Aorta (tissue), 5 donors: ENCODE measurements at regions of chr6 and their contacts with region 1.

Region 1: DNA sequence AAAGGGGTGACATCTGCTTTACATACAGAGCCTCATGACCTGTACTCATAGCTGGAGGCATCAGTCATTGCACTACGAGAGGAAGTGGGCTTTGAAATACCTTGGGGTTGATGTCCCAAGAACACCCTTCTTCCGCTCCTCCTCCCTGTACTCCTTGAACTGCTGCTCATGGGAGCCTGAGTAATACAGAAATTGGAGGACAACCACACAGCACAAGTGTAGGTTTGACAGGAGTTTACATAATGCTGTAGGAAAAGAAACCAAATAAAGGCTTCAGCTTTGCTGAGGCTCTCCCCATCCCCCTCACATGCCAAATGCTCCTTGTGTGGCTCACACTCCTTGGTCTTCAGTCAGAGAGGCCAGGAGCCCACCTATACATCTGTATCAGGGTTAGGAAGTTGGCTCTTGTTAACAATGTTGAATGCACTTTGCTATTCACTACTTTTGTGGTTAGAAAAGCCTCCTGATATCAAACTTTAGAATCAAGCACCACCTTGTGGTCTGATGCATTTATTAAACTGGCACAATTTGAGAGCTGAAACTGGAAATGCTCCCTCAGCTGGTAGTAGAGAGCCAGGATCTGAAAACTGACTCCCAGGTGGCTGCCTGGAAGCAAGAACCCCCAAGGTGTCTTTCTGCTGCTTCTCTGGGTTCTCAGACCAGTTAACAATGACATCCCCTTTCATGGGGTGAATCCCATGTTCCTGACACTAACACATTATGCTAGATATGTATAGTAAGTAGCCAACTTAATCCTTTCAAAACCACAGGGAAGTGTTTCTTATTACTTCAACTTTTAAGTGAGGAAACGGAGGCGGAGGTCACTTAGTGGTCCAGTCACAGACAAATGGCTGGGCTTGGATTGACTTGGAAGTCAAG is 56.2 kb upstream of the EDN1 start:
- DNase-seq: no peak
- ATAC-seq: peak; percentile 80
- H3K4me3 ChIP-seq: no peak overlapping the region
- H3K27ac ChIP-seq: no peak overlapping the region
- H3K4me1 ChIP-seq: no peaks in the 10 kb centered on the region
- H3K27me3 ChIP-seq: no peaks in the 10 kb centered on the region

Region 2: DNA sequence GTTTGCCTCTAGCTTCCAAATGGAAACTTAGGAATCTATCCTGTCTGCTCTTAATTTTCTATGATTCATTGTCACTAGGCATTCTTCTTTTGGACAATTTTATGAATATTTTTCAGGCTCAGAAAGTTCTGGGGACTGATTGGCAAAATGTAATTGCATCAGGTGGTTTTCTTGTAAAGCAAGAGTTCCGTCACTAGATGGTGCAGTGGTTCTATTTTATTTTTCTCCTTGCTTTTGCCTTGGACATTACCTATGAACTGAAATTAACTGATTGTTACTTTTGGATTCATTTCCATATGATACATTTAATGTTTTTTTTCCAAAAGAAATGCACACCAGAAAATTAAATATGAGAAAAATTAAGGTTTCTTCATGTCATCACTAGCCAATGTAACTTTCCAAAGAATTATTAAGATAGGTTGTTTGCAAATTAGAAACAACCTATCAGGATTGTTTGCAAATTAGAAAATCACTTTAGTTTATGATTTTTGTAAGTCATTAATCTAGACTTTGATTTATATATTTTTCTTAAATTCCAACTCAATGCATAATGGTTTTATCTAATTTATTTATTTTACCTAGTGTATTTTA is 648.4 kb before region 1 on chr6:
- intact Hi-C with region 1: loop called (anchors 2 to 5 kb)
- DNase-seq: no peak
- ATAC-seq: no peak
- H3K4me3 ChIP-seq: no peak overlapping the region
- H3K27ac ChIP-seq: no peak overlapping the region
- H3K4me1 ChIP-seq: peaks cover 0 to 4% of the 10 kb centered on the region in 2 donors
- H3K27me3 ChIP-seq: no peaks in the 10 kb centered on the region

Region 3: GRCh38 chr6:11653028-11653583 is 580.8 kb before region 1 on chr6:
- intact Hi-C with region 1: loop called (anchors 2 to 5 kb)
- DNase-seq: peak in 1 of 2 donors; percentile 56
- ATAC-seq: no peak
- H3K4me3 ChIP-seq: no peak overlapping the region
- H3K27ac ChIP-seq: peak overlapping the region in 1 of 2 donors; percentile 6
- H3K4me1 ChIP-seq: peaks cover 0 to 3% of the 10 kb centered on the region in 2 donors
- H3K27me3 ChIP-seq: no peaks in the 10 kb centered on the region

Region 4: GRCh38 chr6:12051861-12052368 is 182.0 kb before region 1 on chr6:
- intact Hi-C with region 1: loop called in 1 of 2 experiments (anchors 10 kb)
- DNase-seq: no peak
- ATAC-seq: no peak
- H3K4me3 ChIP-seq: no peak overlapping the region
- H3K27ac ChIP-seq: no peak overlapping the region
- H3K4me1 ChIP-seq: peaks cover 0 to 2% of the 10 kb centered on the region in 2 donors
- H3K27me3 ChIP-seq: no peaks in the 10 kb centered on the region

Region 5: DNA sequence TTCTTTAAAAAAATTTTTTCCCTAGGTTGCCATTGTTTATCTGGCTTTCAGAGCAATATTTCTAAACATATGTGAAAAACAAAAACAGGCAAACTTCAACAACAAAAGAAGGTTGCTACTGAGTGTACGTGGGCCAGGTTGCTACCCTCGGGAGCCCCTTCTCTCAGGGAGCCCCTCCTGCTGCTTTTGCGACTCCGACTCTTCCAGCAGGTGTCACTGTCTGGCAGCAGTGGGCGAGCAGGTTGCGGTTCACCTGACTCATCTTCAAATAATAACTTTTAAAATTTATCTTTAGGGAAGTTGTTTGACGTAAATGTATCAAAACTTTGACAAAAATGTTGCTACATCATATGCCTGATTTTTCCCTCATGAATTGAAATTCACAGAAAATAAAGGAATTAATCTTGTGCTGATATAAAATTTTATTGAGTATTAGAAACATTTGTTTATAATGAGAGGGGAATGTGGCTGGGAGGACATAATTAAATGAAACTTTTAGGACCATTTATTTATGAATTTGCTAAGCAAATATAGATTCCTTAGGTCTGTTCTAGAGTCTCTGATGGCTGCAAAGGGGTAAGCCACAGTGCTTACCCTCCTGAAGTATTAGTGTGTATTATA is 83.0 kb before region 1 on chr6:
- intact Hi-C with region 1: loop called (anchors 5 to 10 kb)
- DNase-seq: no peak
- ATAC-seq: no peak
- H3K4me3 ChIP-seq: no peak overlapping the region
- H3K27ac ChIP-seq: no peak overlapping the region
- H3K4me1 ChIP-seq: no peaks in the 10 kb centered on the region
- H3K27me3 ChIP-seq: no peaks in the 10 kb centered on the region